A549 (cell line): ENCODE measurements at regions of chr18 and their contacts with region 1.

Region 1: DNA sequence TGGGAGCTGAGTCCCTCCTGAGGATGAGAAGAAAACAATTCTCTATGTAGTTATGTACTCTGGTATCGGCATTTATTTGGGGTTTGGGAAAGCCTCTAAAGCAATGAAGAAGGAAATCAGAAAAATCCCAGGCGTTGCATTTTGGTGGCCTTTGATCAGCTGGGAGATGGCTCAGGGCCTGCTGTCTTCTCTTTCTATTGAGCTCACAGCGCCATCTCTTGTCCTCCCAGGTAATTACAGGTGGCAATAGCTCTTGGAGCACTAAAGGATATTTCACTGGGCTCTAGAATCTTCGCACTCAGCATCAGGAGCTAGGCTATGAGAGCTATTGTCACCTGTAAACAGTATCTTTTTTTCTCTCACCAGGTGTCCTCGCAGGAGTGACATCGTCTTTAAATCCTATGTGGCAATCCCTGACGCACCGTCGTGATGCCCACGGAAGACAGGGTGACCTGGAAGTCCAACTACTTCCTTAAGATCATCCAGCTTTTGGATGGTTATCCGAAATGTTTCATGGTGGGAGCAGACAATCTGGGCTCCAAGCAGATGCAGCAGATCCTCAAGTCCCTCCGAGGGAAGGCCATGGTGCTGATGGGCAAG is 76.1 kb upstream of the PMAIP1 start:
- DNase-seq: peak; percentile 27 to 66
- ATAC-seq: peak; percentile 93
- H3K4me3 ChIP-seq: no peak overlapping the region
- H3K27ac ChIP-seq: peak overlapping the region; percentile 33 to 44; a peak in 3 of 6 replicates
- H3K4me1 ChIP-seq: peaks cover 9% of the 10 kb centered on the region; the same call in 1 of the 3 replicates
- CTCF ChIP-seq: peak; percentile 74
- EP300 ChIP-seq: no peak
- POLR2A ChIP-seq: no peak
- RAD21 ChIP-seq: peak; percentile 85 to 86

Region 2: DNA sequence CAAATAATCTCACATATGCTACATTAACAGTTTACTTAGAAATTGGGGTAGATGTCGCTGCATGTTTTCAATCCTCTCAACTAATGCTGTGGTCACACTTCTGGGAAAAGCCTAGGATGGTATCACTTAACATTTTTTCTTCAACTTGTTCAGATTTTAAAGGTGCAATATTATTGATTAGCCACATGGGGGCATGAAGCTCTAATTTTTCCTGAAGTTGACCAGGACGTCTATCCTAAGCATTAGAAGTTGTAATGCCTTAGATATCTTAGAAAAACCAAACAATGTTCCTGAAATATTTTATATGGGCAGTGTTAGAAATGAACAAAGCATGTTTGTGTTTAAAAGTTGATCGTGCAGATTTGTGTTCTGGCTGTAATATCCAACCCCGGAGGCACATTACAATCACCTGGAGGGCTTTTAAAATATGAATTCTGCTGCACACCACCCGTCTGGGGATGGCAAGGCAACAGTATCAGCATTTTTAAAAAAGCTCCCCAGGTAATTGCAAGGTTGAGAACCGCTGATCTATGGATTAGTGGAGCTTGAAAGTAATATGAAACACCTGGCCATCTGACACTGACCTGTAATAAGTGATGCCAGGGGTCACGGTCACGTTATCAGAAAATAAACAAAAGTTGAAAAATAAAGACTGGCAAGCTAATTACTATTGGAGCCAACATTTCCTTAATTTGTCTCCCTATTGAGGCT is 364.2 kb before region 1 on chr18:
- CTCF ChIA-PET with region 1: interaction called, 104 read pairs
- POLR2A ChIA-PET with region 1: interaction called, 4 read pairs
- DNase-seq: peak; percentile 17 to 30
- ATAC-seq: peak; percentile 40 to 60; a peak in 3 of 6 replicates
- H3K4me3 ChIP-seq: no peak overlapping the region
- H3K27ac ChIP-seq: no peak overlapping the region
- H3K4me1 ChIP-seq: no peaks in the 10 kb centered on the region
- CTCF ChIP-seq: peak; percentile 56
- EP300 ChIP-seq: no peak
- POLR2A ChIP-seq: no peak
- RAD21 ChIP-seq: peak; percentile 65 to 69

Region 3: GRCh38 chr18:59631583-59632181 is 192.0 kb before region 1 on chr18:
- CTCF ChIA-PET with region 1: interaction called, 67 read pairs
- POLR2A ChIA-PET with region 1: no interaction called
- DNase-seq: peak; percentile 6 to 20
- ATAC-seq: peak in 1 of 2 experiments; percentile 41; a peak in 2 of 6 replicates
- H3K4me3 ChIP-seq: no peak overlapping the region
- H3K27ac ChIP-seq: no peak overlapping the region
- H3K4me1 ChIP-seq: no peaks in the 10 kb centered on the region
- CTCF ChIP-seq: peak; percentile 51
- EP300 ChIP-seq: no peak
- POLR2A ChIP-seq: no peak
- RAD21 ChIP-seq: peak; percentile 62 to 67

Region 4: GRCh38 chr18:59691996-59692395 is 131.7 kb before region 1 on chr18:
- CTCF ChIA-PET with region 1: interaction called, 63 read pairs
- POLR2A ChIA-PET with region 1: interaction called, 9 read pairs
- DNase-seq: no peak
- ATAC-seq: no peak
- H3K4me3 ChIP-seq: no peak overlapping the region
- H3K27ac ChIP-seq: no peak overlapping the region
- H3K4me1 ChIP-seq: no peaks in the 10 kb centered on the region
- CTCF ChIP-seq: no peak
- EP300 ChIP-seq: no peak
- POLR2A ChIP-seq: no peak
- RAD21 ChIP-seq: no peak

Region 5: DNA sequence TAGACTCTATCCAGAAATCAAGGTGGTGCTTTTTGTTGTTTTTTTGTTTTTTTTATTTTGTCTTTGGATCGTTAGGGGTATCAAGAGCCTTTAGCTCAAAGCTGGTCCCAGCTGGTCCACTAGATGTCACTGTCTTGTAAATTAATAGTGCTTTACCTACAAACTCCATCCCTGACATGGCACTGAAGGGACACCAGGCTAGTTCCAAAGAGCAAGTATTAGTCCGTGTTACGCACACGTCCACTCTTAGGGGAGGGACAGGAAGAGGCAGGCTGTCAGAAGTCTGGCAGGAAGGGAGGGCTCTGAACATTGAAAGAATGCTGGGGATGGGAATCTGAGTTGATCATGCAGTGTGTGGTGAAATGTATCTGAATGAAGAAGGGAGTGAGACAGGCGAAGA is 40.6 kb before region 1 on chr18:
- CTCF ChIA-PET with region 1: interaction called, 15 read pairs
- POLR2A ChIA-PET with region 1: no interaction called
- DNase-seq: peak; percentile 27 to 74
- ATAC-seq: peak; percentile 88 to 92
- H3K4me3 ChIP-seq: no peak overlapping the region
- H3K27ac ChIP-seq: peak overlapping the region; percentile 38 to 69; a peak in 4 of 6 replicates
- H3K4me1 ChIP-seq: peaks cover 25% of the 10 kb centered on the region; the same call in 2 of the 3 replicates
- CTCF ChIP-seq: peak; percentile 52
- EP300 ChIP-seq: no peak
- POLR2A ChIP-seq: no peak
- RAD21 ChIP-seq: peak; percentile 60 to 62

Region 6: DNA sequence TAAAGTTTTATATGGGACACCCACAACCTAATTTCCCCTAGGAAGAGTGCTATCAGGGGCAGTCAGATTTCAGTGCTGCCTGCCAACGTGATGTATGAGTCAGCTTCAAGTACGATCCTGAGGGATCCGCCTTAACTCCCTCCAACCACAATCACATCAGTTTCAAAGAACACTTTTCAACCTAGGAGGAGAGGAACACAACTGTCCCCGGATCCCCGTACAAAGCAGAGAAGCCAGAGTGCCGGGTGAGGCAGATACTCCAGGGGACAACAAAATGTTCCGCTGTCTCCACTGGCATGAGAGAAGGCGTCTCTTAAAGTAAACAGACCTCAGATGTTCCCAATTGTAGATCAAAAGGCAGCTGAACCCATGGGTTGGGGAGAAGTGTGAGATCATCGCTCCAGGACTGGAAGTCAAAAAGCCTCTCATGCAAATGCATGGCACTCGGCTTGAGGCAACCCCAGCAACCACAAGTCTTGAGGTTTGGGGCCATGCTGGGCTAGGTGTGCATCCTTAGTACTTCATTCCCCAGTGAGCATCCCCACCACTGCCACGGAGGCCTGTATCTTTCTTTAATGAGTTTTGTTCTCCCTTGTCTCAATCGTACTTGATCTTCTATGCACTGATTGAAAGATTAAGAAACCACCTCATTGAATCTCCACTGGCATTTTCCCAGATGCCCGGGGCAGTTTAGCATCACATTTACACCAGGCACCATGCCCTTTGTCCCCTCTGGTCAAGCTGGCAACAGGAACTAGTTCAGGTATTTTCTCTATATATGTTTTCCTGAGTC is 35.5 kb before region 1 on chr18:
- CTCF ChIA-PET with region 1: interaction called, 15 read pairs
- POLR2A ChIA-PET with region 1: no interaction called
- DNase-seq: peak; percentile 10 to 27
- ATAC-seq: peak; percentile 77 to 84; a peak in 5 of 6 replicates
- H3K4me3 ChIP-seq: no peak overlapping the region
- H3K27ac ChIP-seq: peak overlapping the region; percentile 48 to 75; a peak in 5 of 6 replicates
- H3K4me1 ChIP-seq: peaks cover 13% of the 10 kb centered on the region; the same call in 1 of the 3 replicates
- CTCF ChIP-seq: no peak
- EP300 ChIP-seq: no peak
- POLR2A ChIP-seq: no peak
- RAD21 ChIP-seq: no peak

Region 7: DNA sequence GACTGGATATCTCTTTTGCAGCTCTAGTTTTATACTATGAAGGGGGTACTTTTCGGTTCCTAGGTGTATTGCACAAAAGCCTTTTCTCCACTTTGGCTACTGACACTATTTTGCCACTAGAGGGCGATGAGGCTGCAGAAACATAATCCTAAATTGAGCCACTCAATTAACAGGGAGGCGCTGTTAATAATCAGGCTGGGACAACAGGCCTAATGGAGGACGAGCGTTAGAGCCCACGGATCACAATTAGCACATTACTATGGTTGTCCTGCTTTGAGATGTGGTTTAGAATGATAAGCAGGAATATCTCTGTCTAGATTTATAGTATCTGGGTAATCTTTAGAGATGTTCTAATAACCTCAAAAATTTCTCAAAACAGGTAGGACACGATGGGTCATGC is 13.9 kb after region 1 on chr18:
- CTCF ChIA-PET with region 1: interaction called, 19 read pairs
- POLR2A ChIA-PET with region 1: no interaction called
- DNase-seq: peak; percentile 56 to 60
- ATAC-seq: peak; percentile 68 to 81
- H3K4me3 ChIP-seq: no peak overlapping the region
- H3K27ac ChIP-seq: 0 out of 6 replicates have a peak overlapping the region, but pooled peaks of 1 of the 2 experiments have one; percentile 28
- H3K4me1 ChIP-seq: no peaks in the 10 kb centered on the region
- CTCF ChIP-seq: peak; percentile 79
- EP300 ChIP-seq: no peak
- POLR2A ChIP-seq: no peak
- RAD21 ChIP-seq: peak; percentile 79 to 80